B cell (primary cell): ENCODE measurements at regions of chr18 and their contacts with region 1.

Region 1: GRCh38 chr18:58128381-58129374 is 84.7 kb downstream of the NEDD4L start:
- DNase-seq: no peak
- ATAC-seq: no peak
- H3K4me3 ChIP-seq: no peak overlapping the region
- H3K4me3 Mint-ChIP-seq: no peak overlapping the region
- H3K27ac ChIP-seq: no peak overlapping the region
- H3K27ac Mint-ChIP-seq: no peak overlapping the region
- H3K4me1 ChIP-seq: peaks cover 0 to 4% of the 10 kb centered on the region in 2 donors
- H3K4me1 Mint-ChIP-seq: no peaks in the 10 kb centered on the region
- H3K27me3 ChIP-seq: no peaks in the 10 kb centered on the region
- H3K27me3 Mint-ChIP-seq: no peaks in the 10 kb centered on the region
- CTCF ChIP-seq: no peak

Region 2: DNA sequence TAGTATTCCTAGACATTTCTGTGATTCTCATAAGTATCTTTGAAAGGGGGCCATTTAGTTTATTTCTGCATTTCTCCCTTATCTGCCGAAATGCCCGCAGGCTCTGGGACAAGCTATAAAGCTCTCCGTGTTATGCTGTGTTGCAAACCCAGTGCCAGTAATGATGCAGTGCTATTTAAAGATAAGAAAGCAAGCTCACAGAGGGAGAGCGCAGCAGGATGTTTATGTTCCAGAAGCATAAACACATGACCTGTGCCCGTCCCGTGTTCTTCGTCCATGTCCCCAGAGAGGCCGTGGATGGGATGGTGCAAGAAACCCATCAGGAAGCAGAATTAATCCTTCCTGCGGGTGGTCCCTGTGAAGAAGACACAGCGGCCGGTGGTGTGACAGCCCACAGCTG is 14.7 kb after region 1 on chr18:
- CTCF ChIA-PET with region 1: interaction called, 3 read pairs
- POLR2A ChIA-PET with region 1: interaction called, 12 read pairs
- intact Hi-C with region 1: no loop called
- DNase-seq: no peak
- ATAC-seq: no peak
- H3K4me3 ChIP-seq: no peak overlapping the region
- H3K4me3 Mint-ChIP-seq: no peak overlapping the region
- H3K27ac ChIP-seq: no peak overlapping the region
- H3K27ac Mint-ChIP-seq: no peak overlapping the region
- H3K4me1 ChIP-seq: peaks cover 5% of the 10 kb centered on the region in 2 donors
- H3K4me1 Mint-ChIP-seq: peaks cover 10% of the 10 kb centered on the region
- H3K27me3 ChIP-seq: no peaks in the 10 kb centered on the region
- H3K27me3 Mint-ChIP-seq: no peaks in the 10 kb centered on the region
- CTCF ChIP-seq: no peak